Kidney (tissue), 22 donors: ENCODE measurements at regions of chr22 and their contacts with region 1.

Region 1: GRCh38 chr22:25777870-25778269 is 35.9 kb downstream of the MYO18B start:
- DNase-seq: peak in 1 of 5 donors; percentile 41
- H3K4me3 ChIP-seq: no peak overlapping the region
- H3K27ac ChIP-seq: no peak overlapping the region
- H3K4me1 ChIP-seq: no peaks in the 10 kb centered on the region
- H3K27me3 ChIP-seq: no peaks in the 10 kb centered on the region
- CTCF ChIP-seq: no peak

Region 2: DNA sequence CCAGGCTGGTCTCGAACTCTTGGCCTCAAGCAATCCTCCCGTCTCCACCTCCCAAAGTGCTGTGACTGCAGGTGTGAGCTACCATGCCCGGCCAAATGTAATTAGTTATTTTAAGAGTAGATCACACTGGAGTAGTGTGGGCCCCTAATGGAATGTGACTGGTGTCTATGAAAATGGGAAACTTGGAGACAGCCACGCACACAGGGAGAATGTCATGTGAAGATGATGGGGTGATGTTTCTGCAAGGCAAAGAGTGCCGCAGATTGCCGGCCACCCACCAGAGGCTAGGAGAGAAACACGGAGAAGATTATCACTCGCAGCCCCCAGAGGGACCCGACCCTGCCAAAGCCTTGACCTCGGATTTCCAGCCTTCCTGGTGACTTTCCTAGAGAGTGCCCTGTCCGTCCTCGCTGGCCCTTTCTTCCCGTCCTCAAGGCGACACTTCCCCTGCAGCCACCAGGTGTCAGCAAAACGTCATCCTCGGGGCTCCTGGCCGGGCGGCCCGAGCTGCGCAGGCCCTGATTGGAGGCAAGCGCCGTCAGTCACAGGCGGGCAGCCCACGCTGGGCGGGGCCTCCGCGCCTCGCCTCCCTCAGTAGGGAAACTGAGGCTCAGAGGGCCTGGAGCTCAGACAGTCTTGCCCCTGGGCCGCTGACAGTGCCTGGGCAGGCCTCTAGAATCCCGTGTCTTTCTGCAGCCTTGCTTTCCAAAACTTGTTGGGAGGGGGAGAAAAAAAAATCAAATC is 542.2 kb before region 1 on chr22:
- intact Hi-C with region 1: loop called (anchors 10 kb)
- DNase-seq: peak; percentile 84 to 91 (median 87)
- H3K4me3 ChIP-seq: no peak overlapping the region
- H3K27ac ChIP-seq: no peak overlapping the region
- H3K4me1 ChIP-seq: no peaks in the 10 kb centered on the region
- H3K27me3 ChIP-seq: no peaks in the 10 kb centered on the region
- CTCF ChIP-seq: peak; percentile 65

Region 3: GRCh38 chr22:25627271-25627852 is 150.5 kb before region 1 on chr22:
- intact Hi-C with region 1: no loop called
- DNase-seq: peak in 1 of 5 donors; percentile 41
- H3K4me3 ChIP-seq: no peak overlapping the region
- H3K27ac ChIP-seq: no peak overlapping the region
- H3K4me1 ChIP-seq: peaks cover 2 to 3% (median 2%) of the 10 kb centered on the region in 3 donors
- H3K27me3 ChIP-seq: no peaks in the 10 kb centered on the region
- CTCF ChIP-seq: no peak

Region 4: DNA sequence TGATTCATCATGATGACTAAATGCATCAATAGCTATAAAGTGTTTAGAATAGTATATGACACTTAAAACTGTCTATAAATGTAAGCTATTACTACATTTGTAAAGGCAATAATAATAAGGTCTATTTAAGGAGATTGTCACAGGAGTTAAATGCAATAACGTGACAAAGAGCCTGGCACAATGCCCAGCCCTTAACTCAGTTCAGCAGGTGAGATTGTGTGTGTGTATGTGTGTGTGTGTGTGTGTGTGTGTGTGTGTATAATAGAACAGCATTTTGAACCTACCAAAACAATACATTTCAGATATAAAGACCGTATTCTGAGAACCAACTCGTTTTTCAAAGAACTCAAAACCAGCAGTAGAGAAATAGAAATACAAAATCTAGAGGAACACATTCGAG is 141.6 kb after region 1 on chr22:
- intact Hi-C with region 1: no loop called
- DNase-seq: no peak
- H3K4me3 ChIP-seq: no peak overlapping the region
- H3K27ac ChIP-seq: no peak overlapping the region
- H3K4me1 ChIP-seq: no peaks in the 10 kb centered on the region
- H3K27me3 ChIP-seq: no peaks in the 10 kb centered on the region
- CTCF ChIP-seq: no peak